AG04449 (cell line): ENCODE measurements at regions of chr19 and their contacts with region 1.

Region 1: DNA sequence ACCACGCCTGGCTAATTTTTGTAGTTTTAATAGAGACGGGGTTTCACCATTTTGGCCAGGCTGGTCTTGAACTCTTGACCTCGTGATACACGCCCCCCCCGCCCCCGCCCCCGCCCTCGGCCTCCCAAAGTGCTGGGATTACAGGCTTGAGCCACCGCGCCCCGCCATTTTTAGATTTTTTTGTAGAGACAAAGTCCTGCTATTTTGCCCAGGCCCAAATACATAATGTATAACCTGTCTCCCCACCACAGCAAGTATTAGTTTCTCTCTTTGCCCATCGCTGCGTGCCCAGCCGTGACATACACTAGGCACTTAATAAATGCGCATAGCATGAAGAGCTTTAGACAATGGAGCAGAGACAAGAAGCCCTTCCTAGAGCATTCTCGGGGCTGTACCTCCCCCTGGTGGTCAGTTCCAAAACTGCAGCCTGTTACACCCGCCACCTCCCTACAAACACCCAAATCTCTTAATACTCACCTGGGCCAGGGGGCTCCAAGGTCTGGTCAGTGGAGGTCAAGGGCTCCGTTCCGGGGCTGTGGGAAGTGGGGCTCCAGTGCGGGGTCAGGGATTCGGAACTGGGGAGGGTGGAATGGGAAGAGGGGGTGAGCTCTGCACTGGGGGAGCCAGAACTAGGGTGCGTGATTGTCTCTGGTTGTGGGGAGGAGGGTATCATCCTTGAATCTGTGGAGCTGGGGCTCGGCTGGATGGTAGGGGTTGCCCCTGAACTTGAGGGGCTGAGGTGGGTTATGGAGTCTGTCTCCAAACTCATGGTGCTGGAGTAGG is 22.5 kb downstream of the IQCN start:
- DNase-seq: no peak
- H3K4me3 ChIP-seq: no peak overlapping the region
- CTCF ChIP-seq: peak; percentile 85

Region 2: DNA sequence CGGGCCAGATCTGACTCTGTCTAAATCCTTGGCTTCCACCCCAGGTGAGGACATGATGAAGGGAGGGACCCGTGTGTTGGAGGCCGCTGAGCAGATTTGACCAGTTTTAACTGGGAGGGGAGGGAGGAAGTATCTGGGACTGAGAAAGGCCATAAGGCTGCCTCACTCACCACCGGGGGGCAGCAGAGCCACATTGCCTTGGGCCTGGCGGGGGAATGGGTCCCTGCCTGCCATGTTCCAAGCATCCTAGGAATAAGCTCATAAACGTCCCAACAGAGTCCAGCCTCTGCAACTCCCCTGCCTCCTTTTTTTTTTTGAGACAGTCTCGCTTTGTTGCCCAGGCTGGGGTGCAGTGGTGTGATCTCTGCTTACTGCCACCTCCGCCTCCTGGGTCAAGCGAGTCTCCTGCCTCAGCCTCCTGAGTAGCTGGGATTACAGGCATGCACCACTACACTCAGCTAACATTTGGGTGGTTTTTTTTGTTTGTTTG is 138.7 kb before region 1 on chr19:
- CTCF ChIA-PET with region 1: interaction called, 89 read pairs
- POLR2A ChIA-PET with region 1: no interaction called
- DNase-seq: no peak
- H3K4me3 ChIP-seq: no peak overlapping the region
- CTCF ChIP-seq: peak; percentile 95

Region 3: GRCh38 chr19:18167975-18168645 is 83.7 kb before region 1 on chr19:
- CTCF ChIA-PET with region 1: interaction called, 52 read pairs
- POLR2A ChIA-PET with region 1: no interaction called
- DNase-seq: no peak
- H3K4me3 ChIP-seq: no peak overlapping the region
- CTCF ChIP-seq: peak; percentile 72

Region 4: DNA sequence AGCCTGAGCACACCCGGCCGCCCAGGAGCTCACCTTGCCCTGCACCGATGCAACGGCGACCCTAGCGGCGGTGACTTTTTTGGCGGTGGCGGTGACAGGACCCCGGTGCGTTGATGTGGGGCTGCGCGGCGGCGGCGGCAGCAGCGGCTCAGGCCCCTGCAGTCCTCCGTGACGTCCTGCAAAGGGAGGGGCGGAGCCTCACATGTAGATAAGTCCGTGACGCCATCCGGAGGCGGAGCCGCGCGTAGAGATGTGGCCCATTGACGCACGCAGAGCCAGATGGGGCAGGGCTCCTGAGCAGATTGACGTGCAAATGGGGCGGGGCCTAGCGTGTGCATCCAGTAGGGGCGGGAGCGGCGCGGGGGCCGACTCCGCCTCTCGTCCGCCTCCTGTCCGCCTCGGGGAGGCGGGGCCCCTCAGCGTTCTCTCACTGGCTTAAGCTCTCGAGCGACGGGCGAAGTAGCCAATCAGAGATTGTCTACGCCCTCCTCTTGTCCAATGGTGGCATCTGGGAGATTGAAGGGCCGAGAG is 47.9 kb before region 1 on chr19 and contains the start of gene RAB3A:
- CTCF ChIA-PET with region 1: interaction called, 217 read pairs
- POLR2A ChIA-PET with region 1: interaction called, 3 read pairs
- DNase-seq: peak; percentile 99
- H3K4me3 ChIP-seq: peak within 1 kb of the TSS; percentile 96
- CTCF ChIP-seq: no peak

Region 5: GRCh38 chr19:18239303-18239702 is 12.5 kb before region 1 on chr19:
- CTCF ChIA-PET with region 1: interaction called, 24 read pairs
- POLR2A ChIA-PET with region 1: no interaction called
- DNase-seq: no peak
- H3K4me3 ChIP-seq: no peak overlapping the region
- CTCF ChIP-seq: no peak

Region 6: GRCh38 chr19:18420930-18421329 is 169.2 kb after region 1 on chr19:
- CTCF ChIA-PET with region 1: no interaction called
- POLR2A ChIA-PET with region 1: no interaction called
- DNase-seq: no peak
- H3K4me3 ChIP-seq: peak overlapping the region; percentile 73
- CTCF ChIP-seq: no peak

Region 7: GRCh38 chr19:18464646-18465045 is 212.9 kb after region 1 on chr19:
- CTCF ChIA-PET with region 1: no interaction called
- POLR2A ChIA-PET with region 1: no interaction called
- DNase-seq: peak; percentile 65
- H3K4me3 ChIP-seq: no peak overlapping the region
- CTCF ChIP-seq: no peak